Esophagus squamous epithelium (tissue), 5 donors: ENCODE measurements at regions of chr18 and their contacts with region 1.

Region 1: DNA sequence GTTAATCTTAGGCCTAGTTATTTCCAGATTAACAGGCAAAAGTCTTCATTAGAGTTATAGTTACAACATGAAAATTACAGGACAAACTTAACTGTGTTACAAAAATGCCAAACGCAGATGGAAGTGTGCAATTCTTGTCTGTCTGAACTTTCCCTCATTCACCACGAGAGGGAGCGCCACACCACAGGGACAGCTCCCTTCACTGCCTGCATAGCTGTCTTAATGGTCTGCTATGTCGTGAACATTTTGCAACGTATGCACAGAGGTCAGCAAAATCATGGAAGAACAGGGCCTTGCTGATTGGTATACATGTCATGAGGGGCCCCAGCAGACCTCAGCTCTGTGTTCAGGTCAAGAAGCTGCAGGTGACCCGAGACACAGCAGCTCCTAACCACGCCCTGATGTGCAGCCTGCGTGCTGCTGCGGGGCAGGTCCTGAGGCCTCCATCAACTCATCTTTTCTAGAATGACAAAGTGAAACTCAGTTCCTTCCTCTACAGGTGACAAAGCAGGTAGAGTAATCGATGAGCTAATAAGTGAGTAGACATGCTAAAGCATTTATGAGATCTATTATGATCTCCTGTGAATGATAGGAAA is 78.8 kb upstream of the ATP8B1 start:
- DNase-seq: no peak
- H3K4me3 ChIP-seq: no peak overlapping the region
- H3K27ac ChIP-seq: no peak overlapping the region
- H3K4me1 ChIP-seq: peaks cover 0 to 5% (median 4%) of the 10 kb centered on the region in 3 donors
- H3K27me3 ChIP-seq: no peaks in the 10 kb centered on the region
- CTCF ChIP-seq: peak; percentile 70 to 94 (median 89)
- POLR2A ChIP-seq: no peak

Region 2: DNA sequence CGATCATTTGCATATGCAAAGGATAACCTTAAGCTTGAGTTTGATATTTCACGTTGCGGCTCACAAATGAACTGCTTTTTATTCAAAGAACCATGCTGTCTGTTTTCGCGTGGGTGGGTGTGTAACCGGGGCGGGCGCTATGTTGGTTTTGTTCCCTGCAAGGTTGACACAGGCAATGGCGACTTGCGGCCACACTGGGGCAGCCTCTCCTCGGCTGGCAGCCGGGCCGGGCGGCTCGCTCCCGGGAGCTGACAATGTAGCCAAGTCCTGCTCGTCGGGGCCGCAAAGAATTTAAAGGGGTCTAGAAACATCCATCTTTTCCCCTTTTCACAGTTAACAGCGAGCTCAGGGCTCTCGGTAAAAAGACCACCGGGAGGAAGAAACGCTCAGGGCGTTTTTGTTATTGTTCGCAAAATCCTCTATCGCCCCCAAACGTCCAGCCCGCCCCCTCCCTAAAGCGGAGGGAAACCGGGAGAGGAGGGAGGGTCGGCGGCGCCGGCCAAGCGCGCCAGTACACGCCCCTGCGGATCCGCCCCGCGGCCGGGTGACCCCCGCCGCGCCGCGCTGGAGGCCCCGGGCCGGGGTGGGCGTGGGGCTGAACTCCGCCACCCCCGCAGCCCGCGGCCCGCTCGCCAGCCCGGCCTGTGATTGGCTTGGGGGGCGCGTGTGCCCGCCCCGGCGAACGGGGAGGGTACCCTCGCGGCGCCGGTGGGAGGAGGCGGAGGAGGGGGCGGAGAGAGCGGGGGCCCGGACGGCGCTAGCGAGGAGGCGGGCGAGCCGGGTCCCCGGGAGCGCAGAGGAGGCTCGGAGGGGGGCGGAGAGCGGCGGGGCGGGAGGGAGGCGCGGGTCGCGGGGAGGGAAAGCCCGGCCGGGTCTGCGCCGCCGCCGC is 161.8 kb after region 1 on chr18 and contains the start of gene NEDD4L:
- intact Hi-C with region 1: loop called (anchors 10 kb)
- DNase-seq: peak; percentile 32
- H3K4me3 ChIP-seq: peak within 1 kb of the TSS; percentile 66 to 92 (median 86)
- H3K27ac ChIP-seq: peak within 1 kb of the TSS; percentile 86 to 93 (median 90)
- H3K4me1 ChIP-seq: peaks cover 0 to 39% (median 14%) of the 10 kb centered on the region in 3 donors
- H3K27me3 ChIP-seq: no peaks in the 10 kb centered on the region
- CTCF ChIP-seq: peak; percentile 77 to 92 (median 84)
- POLR2A ChIP-seq: peak in 1 of 4 donors; percentile 24
- total RNA-seq, gene NEDD4L: 17.0 to 27.6 (median 21.9) TPM

Region 3: GRCh38 chr18:58128381-58129374 is 246.8 kb after region 1 on chr18:
- intact Hi-C with region 1: loop called (anchors 10 kb)
- DNase-seq: no peak
- H3K4me3 ChIP-seq: no peak overlapping the region
- H3K27ac ChIP-seq: no peak overlapping the region
- H3K4me1 ChIP-seq: no peaks in the 10 kb centered on the region
- H3K27me3 ChIP-seq: no peaks in the 10 kb centered on the region
- CTCF ChIP-seq: no peak
- POLR2A ChIP-seq: no peak